Activated CD4-positive, alpha-beta T cell treated with anti-CD3 and anti-CD28 coated beads for 36 hours (primary cell): ENCODE measurements at regions of chr4 and their contacts with region 1.

Region 1: DNA sequence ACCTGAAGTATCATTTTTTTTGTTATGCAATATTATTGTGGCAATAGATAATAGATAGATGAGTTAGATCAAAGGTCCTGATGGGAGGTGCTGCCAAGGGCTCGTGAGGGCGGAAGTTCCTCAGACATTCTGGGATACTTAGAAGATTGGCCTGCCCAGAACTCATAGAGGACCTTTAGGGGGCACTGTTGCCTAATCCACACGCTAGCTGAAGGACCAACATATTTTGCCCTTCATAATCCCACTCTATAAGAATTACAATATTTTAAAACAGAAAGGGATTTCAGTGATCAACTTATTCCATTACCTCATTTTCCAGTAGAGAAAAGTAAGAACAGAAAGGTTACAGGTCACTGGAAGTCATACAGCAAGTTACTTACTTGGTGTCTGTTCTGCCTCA is 22.9 kb upstream of the COX7B2 start:
- DNase-seq: peak; percentile 34
- ATAC-seq: peak; percentile 26
- H3K4me3 Mint-ChIP-seq: no peak overlapping the region
- H3K27ac Mint-ChIP-seq: no peak overlapping the region
- H3K4me1 Mint-ChIP-seq: no peaks in the 10 kb centered on the region
- H3K27me3 Mint-ChIP-seq: peaks cover 4% of the 10 kb centered on the region

Region 2: GRCh38 chr4:47032415-47033106 is 100.6 kb after region 1 on chr4:
- CTCF ChIA-PET with region 1: no interaction called
- POLR2A ChIA-PET with region 1: no interaction called
- intact Hi-C with region 1: loop called (anchors 1 to 5 kb)
- DNase-seq: peak; percentile 67
- ATAC-seq: peak; percentile 81
- H3K4me3 Mint-ChIP-seq: peak overlapping the region; percentile 49
- H3K27ac Mint-ChIP-seq: no peak overlapping the region
- H3K4me1 Mint-ChIP-seq: peaks cover 15% of the 10 kb centered on the region
- H3K27me3 Mint-ChIP-seq: peaks cover 31% of the 10 kb centered on the region

Region 3: GRCh38 chr4:47122592-47123291 is 190.8 kb after region 1 on chr4:
- CTCF ChIA-PET with region 1: interaction called, 5 read pairs
- POLR2A ChIA-PET with region 1: no interaction called
- intact Hi-C with region 1: loop called in 1 of 2 experiments (anchors 2 kb)
- DNase-seq: peak; percentile 61
- ATAC-seq: peak; percentile 75
- H3K4me3 Mint-ChIP-seq: no peak overlapping the region
- H3K27ac Mint-ChIP-seq: no peak overlapping the region
- H3K4me1 Mint-ChIP-seq: no peaks in the 10 kb centered on the region
- H3K27me3 Mint-ChIP-seq: peaks cover 8% of the 10 kb centered on the region